ENCODE measurements at regions of chr4 and their contacts with region 1.

Region 1: DNA sequence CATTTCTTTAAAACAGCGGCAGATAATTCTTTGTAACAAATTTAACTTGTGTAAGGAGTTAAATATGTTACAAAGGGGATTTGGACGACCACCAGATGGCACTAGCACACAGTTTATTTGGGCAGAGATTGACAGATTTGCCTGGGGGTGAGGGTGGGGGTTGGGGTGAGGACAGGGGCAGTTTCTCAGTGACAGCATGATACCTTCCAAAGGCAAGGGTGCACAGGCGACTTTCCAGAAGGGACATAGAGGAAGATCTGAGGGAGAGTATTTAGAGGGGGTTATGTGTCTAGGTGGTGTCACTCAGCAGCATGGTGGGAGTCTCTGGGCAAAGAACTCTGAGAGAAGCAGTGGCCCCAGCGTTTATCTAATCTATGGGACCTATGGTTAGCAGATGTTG is 9.6 kb upstream of the TMA16 start:
- DNase-seq: no peak
- H3K4me3 ChIP-seq: no peak overlapping the region
- H3K27ac ChIP-seq: no peak overlapping the region
- H3K4me1 ChIP-seq: no peaks in the 10 kb centered on the region
- H3K27me3 ChIP-seq: no peaks in the 10 kb centered on the region
- CTCF ChIP-seq: peak in 2 of 3 experiments; percentile 33 to 48
- POLR2A ChIP-seq: no peak

Region 2: DNA sequence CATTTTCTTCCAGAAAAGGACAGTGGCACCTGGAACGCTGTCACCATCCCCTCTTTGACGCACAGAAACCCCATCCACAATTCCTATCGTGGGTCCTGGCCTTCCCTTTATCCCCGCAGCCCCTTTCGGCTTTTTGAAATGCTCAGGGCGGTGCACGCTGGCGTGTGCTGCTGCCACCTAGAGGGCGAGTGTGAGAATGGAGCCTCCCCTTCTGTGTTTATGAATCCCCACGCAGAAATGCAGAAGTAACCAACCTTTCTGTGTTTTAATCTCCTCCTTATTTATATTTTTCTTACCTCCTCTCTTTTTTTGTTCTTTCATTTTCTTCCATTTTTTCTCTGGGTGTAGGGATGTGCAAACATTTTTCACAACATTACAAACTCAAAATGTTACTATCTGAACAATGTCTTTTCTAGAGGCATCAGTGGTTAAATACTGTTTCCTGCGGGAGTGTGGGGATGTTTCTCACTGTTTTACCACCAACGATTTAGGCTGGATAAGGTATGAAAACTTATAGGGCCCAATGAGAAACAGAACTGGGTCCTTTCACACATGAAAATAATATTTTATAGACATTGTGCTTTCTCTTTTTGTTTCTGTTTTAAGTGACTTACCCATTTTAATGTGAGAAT is 59.6 kb after region 1 on chr4:
- intact Hi-C with region 1: loop called (anchors 5 kb)
- DNase-seq: no peak
- H3K4me3 ChIP-seq: peak overlapping the region in 1 of 2 donors; percentile 24
- H3K27ac ChIP-seq: no peak overlapping the region
- H3K4me1 ChIP-seq: peaks cover 6% of the 10 kb centered on the region
- H3K27me3 ChIP-seq: no peaks in the 10 kb centered on the region
- CTCF ChIP-seq: peak in 2 of 3 experiments; percentile 58 to 86
- POLR2A ChIP-seq: no peak